ENCODE measurements at regions of chr22 and their contacts with region 1.

Region 1: DNA sequence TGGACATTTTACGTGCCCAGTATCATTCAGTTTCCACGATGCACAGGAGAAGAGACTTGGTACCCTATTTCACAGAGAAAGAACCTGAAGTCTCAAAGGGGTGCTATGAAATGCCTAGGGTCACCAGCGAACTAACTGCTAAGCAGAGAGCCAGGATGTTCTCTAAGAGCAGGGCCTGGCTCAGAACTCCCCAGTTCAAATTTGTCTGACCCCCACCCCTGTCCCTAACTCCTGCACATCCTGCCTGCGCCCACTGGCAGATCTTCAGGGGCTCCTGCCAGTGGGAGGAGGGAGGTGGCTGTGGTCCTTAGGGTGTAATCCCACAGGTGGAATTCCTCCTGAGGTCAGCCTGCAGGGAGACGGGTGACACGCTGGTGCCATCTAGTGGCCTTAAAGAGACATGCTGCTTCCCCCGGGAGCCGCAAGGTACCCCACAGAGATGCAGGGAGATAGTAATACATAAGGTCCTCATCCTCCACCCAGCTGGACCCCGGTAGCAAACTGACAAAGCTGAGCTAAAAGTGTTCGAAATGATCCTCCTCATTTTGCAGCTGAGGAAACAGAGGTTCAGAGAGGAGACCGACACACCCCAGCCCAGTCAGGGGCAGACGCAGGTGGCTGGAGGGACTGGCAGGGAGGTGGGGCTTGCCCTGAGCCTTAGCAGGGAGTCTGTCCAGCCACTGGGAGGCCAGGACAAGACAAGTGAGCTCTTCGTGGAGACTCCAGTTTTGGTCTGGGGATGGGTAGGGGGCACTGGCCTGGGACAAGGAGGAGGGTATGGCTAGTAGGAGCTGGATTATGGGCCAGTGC is 34.1 kb downstream of the MB start:
- DNase-seq: peak; percentile 59
- ATAC-seq: peak; percentile 78
- H3K4me3 Mint-ChIP-seq: no peak overlapping the region
- H3K27ac Mint-ChIP-seq: no peak overlapping the region
- H3K4me1 Mint-ChIP-seq: no peaks in the 10 kb centered on the region
- H3K27me3 Mint-ChIP-seq: no peaks in the 10 kb centered on the region
- CTCF ChIP-seq: peak; percentile 99

Region 2: GRCh38 chr22:35572556-35572955 is 10.5 kb before region 1 on chr22:
- CTCF ChIA-PET with region 1: interaction called, 14 read pairs
- POLR2A ChIA-PET with region 1: interaction called, 3 read pairs
- intact Hi-C with region 1: no loop called
- DNase-seq: no peak
- ATAC-seq: no peak
- H3K4me3 Mint-ChIP-seq: no peak overlapping the region
- H3K27ac Mint-ChIP-seq: no peak overlapping the region
- H3K4me1 Mint-ChIP-seq: no peaks in the 10 kb centered on the region
- H3K27me3 Mint-ChIP-seq: no peaks in the 10 kb centered on the region
- CTCF ChIP-seq: no peak